A549 (cell line): ENCODE measurements at regions of chr6 and their contacts with region 1.

Region 1: DNA sequence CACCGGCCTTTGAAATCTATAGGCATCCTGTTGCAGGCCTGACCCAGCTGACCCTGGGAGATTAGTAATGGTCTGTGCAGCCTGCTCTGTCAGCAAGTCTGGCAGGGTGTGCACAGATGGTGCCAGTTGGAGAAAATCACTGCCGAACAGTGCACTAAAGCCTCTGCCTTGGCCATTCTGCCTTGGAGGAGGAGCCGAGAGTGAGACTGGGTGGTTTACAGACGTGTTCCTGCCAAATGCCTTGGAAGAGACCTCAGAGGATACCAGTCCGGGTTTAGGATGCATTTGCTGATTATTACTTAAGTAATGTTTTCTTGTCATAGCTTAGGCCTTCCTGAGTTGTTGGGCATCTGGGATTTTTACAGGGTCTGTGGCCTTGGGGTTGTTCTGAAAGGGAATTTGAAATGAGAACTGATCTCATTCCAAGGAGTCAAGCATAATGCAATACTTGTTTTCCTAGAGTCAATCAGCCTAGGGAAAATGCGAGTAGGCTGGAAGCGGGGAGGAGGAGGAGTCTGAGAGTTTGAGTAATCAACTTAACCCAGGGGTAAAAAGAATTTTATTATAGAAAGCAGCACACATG is 292.1 kb downstream of the SOX4 start:
- DNase-seq: peak; percentile 15 to 79
- ATAC-seq: peak; percentile 81 to 88
- H3K4me3 ChIP-seq: no peak overlapping the region; the same call in 2 of the 3 replicates
- H3K27ac ChIP-seq: peak overlapping the region; percentile 93 to 99
- H3K4me1 ChIP-seq: peaks cover 44% of the 10 kb centered on the region
- CTCF ChIP-seq: no peak
- EP300 ChIP-seq: peak in 1 of 2 experiments; percentile 75; a peak in 2 of 5 replicates
- POLR2A ChIP-seq: no peak
- RAD21 ChIP-seq: peak in 1 of 2 experiments; percentile 44; a peak in 3 of 5 replicates

Region 2: DNA sequence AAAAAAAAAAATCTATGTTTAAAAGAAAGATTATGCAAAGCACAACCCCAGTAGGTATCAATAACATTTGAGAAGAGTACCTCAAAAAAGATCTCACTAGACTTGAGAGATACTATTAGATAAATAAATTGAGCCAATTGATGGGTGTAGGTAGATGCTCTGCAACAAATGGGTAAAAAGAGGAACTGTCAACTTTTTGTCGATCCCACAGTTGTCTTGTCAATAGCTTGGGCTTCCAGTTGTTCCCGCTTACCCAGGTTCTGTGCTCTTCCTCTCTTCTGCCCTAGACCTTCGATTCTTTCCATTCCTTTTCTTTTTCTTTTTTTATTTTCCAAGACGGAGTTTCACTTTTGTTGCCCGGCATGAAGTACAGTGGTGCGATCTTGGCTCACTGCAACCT is 65.2 kb before region 1 on chr6:
- CTCF ChIA-PET with region 1: no interaction called
- POLR2A ChIA-PET with region 1: no interaction called
- DNase-seq: no peak
- ATAC-seq: no peak
- H3K4me3 ChIP-seq: no peak overlapping the region
- H3K27ac ChIP-seq: no peak overlapping the region
- H3K4me1 ChIP-seq: peaks cover 19% of the 10 kb centered on the region
- CTCF ChIP-seq: no peak
- EP300 ChIP-seq: no peak
- POLR2A ChIP-seq: no peak
- RAD21 ChIP-seq: no peak

Region 3: DNA sequence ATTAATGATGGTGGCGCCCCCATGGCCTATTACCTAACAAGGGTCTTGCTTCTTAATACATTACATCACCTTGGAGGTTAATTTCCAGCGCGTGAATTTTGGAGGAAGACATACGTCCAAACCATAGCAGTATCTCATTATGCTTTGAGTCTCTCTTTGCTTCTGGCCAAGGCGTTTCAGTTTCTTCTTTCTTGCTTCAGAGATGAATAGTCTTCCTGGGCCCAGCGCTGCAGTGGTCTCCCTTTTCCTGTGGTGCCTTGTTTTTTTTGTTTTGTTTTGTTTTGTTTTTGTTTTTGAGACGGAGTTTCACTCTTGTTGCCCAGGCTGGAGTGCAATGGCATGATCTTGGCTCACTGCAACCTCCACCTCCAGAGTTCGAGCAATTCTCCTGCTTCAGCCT is 23.7 kb before region 1 on chr6:
- CTCF ChIA-PET with region 1: no interaction called
- POLR2A ChIA-PET with region 1: no interaction called
- DNase-seq: no peak
- ATAC-seq: no peak
- H3K4me3 ChIP-seq: no peak overlapping the region
- H3K27ac ChIP-seq: no peak overlapping the region
- H3K4me1 ChIP-seq: 0 out of 3 replicates have a peak, but pooled peaks cover 1% of the 10 kb centered on the region
- CTCF ChIP-seq: no peak
- EP300 ChIP-seq: no peak
- POLR2A ChIP-seq: no peak
- RAD21 ChIP-seq: no peak

Region 4: DNA sequence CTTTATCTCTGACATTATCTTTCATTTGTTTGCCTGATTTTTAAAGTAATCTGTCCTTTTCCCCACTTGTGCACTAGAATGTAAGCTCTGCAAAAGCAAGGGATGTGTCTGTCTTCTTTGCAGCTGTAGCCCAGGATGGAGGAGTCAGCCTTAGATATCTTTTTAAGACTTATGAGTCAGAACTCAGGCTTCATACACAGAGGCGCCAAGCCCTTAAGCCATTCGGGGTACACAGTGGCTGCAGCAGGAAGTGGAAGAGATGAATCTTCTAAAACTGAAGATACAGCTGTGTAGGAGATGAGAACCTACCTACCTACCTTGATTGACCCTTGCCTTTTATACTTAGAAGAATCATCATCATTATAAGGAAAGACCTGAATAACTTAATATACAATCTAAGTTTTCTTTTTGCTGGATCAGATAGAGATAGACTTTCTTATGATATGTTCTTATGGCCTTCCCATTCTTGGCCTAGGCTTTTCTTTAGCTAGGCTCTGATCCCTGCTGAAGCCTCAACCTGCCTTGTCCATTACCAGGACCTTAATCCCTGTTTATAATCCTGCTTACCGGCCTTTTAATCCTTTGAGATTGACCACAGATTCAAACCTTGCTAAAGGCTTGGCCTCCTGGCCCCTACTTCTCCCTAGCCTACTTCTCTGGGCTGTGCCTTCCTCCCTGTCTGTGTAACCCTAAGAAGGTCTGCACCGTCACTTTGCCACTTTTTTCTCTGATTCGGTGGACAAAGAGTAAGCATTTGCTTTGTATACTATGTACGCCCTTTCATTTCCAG is 106.8 kb after region 1 on chr6:
- CTCF ChIA-PET with region 1: no interaction called
- POLR2A ChIA-PET with region 1: interaction called, 10 read pairs
- DNase-seq: no peak
- ATAC-seq: no peak
- H3K4me3 ChIP-seq: no peak overlapping the region
- H3K27ac ChIP-seq: 0 out of 6 replicates have a peak overlapping the region, but pooled peaks of 1 of the 2 experiments have one; percentile 11
- H3K4me1 ChIP-seq: peaks cover 4% of the 10 kb centered on the region
- CTCF ChIP-seq: no peak
- EP300 ChIP-seq: no peak
- POLR2A ChIP-seq: no peak
- RAD21 ChIP-seq: no peak

Region 5: DNA sequence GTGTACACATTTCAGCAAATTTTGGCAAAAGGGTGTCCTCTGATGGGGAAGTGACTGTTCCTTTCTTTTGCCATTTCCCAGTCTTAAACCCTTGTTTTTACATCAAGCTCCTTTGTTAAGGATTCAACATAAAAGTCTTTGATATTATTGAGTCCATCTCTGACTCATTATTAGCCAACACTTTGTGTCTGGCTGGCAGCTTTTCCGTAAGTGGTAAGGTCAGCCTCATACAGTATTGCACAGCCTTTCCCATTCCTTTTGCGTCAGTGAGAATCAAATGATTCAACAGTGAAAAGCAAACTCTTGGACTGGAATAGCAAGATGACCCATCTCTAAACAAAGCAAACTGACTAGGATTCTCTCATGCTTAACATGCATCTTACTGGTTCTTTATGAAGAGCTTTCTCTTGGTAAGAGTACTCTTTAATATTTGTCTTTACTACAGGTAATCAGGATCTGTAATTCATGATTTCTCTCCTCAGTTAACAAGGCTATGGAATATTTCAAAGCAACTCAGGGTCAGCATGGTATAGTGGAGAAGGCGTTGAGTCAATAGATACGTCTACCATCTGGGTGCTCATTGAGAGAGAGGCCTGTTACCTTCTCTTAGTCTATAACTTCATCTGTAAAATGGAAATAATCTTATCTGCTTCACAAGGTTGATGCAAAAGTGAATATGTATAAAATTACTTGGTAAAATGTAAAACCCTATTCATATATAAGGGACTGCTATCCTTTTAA is 227.6 kb after region 1 on chr6:
- CTCF ChIA-PET with region 1: no interaction called
- POLR2A ChIA-PET with region 1: interaction called, 19 read pairs
- DNase-seq: peak; percentile 55 to 97
- ATAC-seq: peak; percentile 97 to 99
- H3K4me3 ChIP-seq: peak overlapping the region; percentile 5; the same call in 1 of the 3 replicates
- H3K27ac ChIP-seq: peak overlapping the region; percentile 88 to 98
- H3K4me1 ChIP-seq: peaks cover 50% of the 10 kb centered on the region
- CTCF ChIP-seq: no peak
- EP300 ChIP-seq: peak; percentile 98 to 99
- POLR2A ChIP-seq: no peak
- RAD21 ChIP-seq: peak; percentile 30 to 82